IMR-90 (cell line): ENCODE measurements at regions of chr10 and their contacts with region 1.

Region 1: DNA sequence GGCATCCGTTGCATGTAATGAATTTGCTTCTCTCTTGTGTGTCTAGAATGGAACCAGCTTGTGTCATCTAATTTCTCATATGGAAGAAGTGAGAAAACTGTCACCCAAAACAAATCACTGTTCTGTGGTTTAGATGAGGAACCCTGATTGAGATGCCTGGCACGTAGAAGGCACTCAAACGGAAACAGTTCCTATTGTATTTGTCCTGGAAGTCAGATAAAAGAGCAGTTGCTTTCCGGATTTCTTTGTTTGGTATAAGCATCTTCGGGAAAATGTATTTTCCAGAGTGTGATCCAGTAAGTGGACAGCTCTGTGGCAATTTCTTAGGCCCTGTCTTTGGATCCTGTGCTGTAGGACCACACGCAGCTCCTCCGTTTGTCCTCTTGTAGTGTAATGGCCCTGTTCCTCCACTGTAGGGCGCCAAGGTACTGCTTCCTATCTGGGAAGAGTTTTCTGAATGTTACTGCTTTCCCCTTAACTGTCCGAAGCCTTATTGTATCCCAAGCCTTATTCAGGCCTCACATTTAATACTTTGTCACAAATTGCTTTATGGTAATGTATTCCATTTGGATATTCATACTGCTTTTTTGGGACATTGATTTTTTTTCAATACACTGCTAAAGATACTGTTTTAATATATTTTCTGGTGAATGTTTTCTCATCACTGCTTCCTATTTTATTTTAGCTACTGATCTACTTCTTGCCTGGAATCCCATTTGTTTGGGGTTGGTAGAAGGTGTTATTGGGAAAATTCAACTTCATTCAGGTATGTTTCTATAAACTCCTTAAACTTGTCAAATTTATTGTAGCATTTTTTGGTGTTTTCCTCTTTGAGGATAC is 24.8 kb downstream of the INPP5F start:
- DNase-seq: peak; percentile 82
- ATAC-seq: peak; percentile 100
- H3K4me3 ChIP-seq: no peak overlapping the region
- H3K27ac ChIP-seq: no peak overlapping the region
- H3K4me1 ChIP-seq: peaks cover 5% of the 10 kb centered on the region
- H3K27me3 ChIP-seq: no peaks in the 10 kb centered on the region
- CTCF ChIP-seq: peak; percentile 95
- POLR2A ChIP-seq: 0 out of 2 replicates have a peak, but pooled peaks have one; percentile 40
- RAD21 ChIP-seq: peak; percentile 99

Region 2: GRCh38 chr10:118950190-118950680 is 800.4 kb before region 1 on chr10:
- CTCF ChIA-PET with region 1: no interaction called
- POLR2A ChIA-PET with region 1: no interaction called
- dilution Hi-C with region 1: no loop called
- in situ Hi-C with region 1: no loop called
- intact Hi-C with region 1: no loop called
- DNase-seq: no peak
- ATAC-seq: no peak
- H3K4me3 ChIP-seq: no peak overlapping the region
- H3K27ac ChIP-seq: no peak overlapping the region
- H3K4me1 ChIP-seq: no peaks in the 10 kb centered on the region
- H3K27me3 ChIP-seq: peaks cover 9% of the 10 kb centered on the region
- CTCF ChIP-seq: no peak
- POLR2A ChIP-seq: no peak
- RAD21 ChIP-seq: no peak

Region 3: GRCh38 chr10:119686439-119687191 is 64.0 kb before region 1 on chr10:
- CTCF ChIA-PET with region 1: interaction called, 10 read pairs
- POLR2A ChIA-PET with region 1: no interaction called
- dilution Hi-C with region 1: no loop called
- in situ Hi-C with region 1: no loop called
- intact Hi-C with region 1: loop called (anchors 1 kb)
- DNase-seq: peak; percentile 89
- ATAC-seq: peak; percentile 91
- H3K4me3 ChIP-seq: peak overlapping the region; percentile 30; the same call in 1 of the 2 replicates
- H3K27ac ChIP-seq: no peak overlapping the region
- H3K4me1 ChIP-seq: peaks cover 2% of the 10 kb centered on the region
- H3K27me3 ChIP-seq: no peaks in the 10 kb centered on the region
- CTCF ChIP-seq: peak; percentile 93
- POLR2A ChIP-seq: no peak
- RAD21 ChIP-seq: peak; percentile 91

Region 4: DNA sequence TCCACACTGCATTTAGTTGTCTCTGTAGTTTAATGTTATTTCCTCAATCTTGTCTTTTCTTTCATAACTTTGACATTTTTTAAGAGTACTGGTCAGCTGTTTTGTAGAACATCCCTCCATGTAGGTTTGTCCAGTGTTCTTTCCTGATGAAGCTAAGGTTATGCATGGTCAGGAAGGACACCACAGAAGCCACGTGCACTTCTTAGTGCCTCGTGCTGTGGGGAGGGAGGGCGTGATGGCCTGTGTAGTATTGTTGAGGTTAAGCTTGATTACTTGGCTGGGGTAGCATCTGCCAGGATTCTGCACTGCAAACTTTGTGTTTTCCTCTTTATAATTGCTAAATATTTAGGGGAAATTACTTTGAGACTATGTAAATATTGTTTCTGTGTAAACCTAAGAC is 73.7 kb after region 1 on chr10:
- CTCF ChIA-PET with region 1: no interaction called
- POLR2A ChIA-PET with region 1: interaction called, 3 read pairs
- dilution Hi-C with region 1: no loop called
- in situ Hi-C with region 1: no loop called
- intact Hi-C with region 1: loop called (anchors 2 kb)
- DNase-seq: no peak
- ATAC-seq: no peak
- H3K4me3 ChIP-seq: no peak overlapping the region
- H3K27ac ChIP-seq: no peak overlapping the region
- H3K4me1 ChIP-seq: no peaks in the 10 kb centered on the region
- H3K27me3 ChIP-seq: no peaks in the 10 kb centered on the region
- CTCF ChIP-seq: no peak
- POLR2A ChIP-seq: no peak
- RAD21 ChIP-seq: no peak

Region 5: DNA sequence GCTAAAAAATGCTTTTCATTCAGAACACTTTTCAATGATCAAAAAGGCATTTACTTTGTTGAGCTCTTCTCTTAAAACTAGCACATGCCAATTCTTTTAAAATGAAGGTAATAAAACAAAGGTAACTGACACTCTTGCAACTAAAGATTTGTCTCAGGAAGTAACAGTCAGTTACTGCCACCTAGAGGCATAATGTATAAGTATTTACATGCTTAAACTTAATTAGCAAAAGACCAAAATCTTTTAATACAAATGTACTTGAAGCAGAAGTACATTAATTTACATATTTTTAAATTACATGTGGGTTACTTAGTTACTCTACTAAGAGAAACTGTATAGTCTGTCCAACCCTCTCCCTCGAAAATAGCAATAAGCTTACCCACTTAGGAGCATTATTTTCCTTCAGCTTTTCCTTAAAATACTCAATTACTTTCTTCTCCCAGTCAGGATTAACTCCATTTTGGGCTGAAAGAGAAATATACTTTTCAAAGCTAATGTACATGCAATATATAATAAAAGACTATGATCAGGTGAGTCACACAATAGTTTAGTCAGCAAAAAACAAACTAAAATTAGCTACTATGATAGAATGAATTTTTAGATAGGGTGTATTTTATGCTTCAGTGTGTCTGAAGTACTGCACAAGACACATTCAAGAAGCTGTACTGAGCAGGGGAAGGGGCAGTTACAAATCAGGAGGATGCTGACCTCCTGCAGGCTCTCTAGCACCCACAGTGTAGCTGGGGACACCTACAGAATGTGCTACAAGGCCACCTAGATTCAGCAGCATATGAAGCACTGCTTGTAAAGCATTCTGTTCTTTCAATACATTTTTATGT is 109.0 kb after region 1 on chr10:
- CTCF ChIA-PET with region 1: interaction called, 38 read pairs
- POLR2A ChIA-PET with region 1: no interaction called
- dilution Hi-C with region 1: no loop called
- in situ Hi-C with region 1: loop called (anchors 5 kb)
- intact Hi-C with region 1: loop called (anchors 1 kb)
- DNase-seq: peak; percentile 69
- ATAC-seq: peak; percentile 59
- H3K4me3 ChIP-seq: no peak overlapping the region
- H3K27ac ChIP-seq: no peak overlapping the region
- H3K4me1 ChIP-seq: no peaks in the 10 kb centered on the region; the same call in 1 of the 2 replicates
- H3K27me3 ChIP-seq: no peaks in the 10 kb centered on the region
- CTCF ChIP-seq: peak; percentile 70
- POLR2A ChIP-seq: no peak
- RAD21 ChIP-seq: peak; percentile 80

Region 6: DNA sequence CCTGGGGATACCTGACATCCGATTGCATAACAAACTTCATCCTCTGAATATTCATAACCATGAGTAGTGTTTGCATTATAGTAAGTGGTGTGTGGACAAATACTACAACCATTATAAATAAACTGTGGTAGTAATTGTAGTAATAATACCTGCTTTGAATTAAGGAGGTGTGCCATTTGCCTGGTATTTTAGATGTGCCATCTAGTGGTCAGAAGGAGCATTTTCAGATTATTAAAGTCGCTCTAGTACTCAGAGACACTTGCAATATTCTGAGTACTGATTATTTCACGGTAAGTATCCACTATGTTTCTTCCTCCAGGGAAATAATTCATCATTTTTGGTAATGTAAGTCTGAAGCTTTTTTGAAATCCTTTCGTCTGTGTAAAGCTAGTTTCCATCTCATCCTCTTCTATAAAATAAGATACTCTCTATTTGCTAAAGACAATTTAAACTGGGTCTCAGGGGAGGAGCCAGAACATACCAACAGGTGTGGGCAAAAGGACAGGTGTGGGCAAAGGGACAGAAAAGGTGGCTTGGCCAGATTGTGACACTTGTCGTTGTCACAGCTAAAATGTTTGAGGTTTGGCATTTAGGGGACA is 985.3 kb after region 1 on chr10:
- CTCF ChIA-PET with region 1: no interaction called
- POLR2A ChIA-PET with region 1: no interaction called
- dilution Hi-C with region 1: no loop called
- in situ Hi-C with region 1: no loop called
- intact Hi-C with region 1: loop called (anchors 10 kb)
- DNase-seq: peak; percentile 12
- ATAC-seq: peak; percentile 53; the same call in 1 of the 2 replicates
- H3K4me3 ChIP-seq: no peak overlapping the region
- H3K27ac ChIP-seq: no peak overlapping the region
- H3K4me1 ChIP-seq: no peaks in the 10 kb centered on the region
- H3K27me3 ChIP-seq: no peaks in the 10 kb centered on the region
- CTCF ChIP-seq: peak; percentile 58
- POLR2A ChIP-seq: no peak
- RAD21 ChIP-seq: peak; percentile 30; the same call in 1 of the 2 replicates